ENCODE measurements at regions of chr17 and their contacts with region 1.

Region 1: GRCh38 chr17:4789901-4790704 is 1.3 kb downstream of the GLTPD2 start:
- DNase-seq: peak; percentile 95
- H3K4me3 Mint-ChIP-seq: peak overlapping the region; percentile 75
- H3K27ac Mint-ChIP-seq: peak overlapping the region; percentile 93
- H3K4me1 Mint-ChIP-seq: peaks cover 18% of the 10 kb centered on the region
- H3K27me3 Mint-ChIP-seq: no peaks in the 10 kb centered on the region
- CTCF ChIP-seq: peak; percentile 70

Region 2: DNA sequence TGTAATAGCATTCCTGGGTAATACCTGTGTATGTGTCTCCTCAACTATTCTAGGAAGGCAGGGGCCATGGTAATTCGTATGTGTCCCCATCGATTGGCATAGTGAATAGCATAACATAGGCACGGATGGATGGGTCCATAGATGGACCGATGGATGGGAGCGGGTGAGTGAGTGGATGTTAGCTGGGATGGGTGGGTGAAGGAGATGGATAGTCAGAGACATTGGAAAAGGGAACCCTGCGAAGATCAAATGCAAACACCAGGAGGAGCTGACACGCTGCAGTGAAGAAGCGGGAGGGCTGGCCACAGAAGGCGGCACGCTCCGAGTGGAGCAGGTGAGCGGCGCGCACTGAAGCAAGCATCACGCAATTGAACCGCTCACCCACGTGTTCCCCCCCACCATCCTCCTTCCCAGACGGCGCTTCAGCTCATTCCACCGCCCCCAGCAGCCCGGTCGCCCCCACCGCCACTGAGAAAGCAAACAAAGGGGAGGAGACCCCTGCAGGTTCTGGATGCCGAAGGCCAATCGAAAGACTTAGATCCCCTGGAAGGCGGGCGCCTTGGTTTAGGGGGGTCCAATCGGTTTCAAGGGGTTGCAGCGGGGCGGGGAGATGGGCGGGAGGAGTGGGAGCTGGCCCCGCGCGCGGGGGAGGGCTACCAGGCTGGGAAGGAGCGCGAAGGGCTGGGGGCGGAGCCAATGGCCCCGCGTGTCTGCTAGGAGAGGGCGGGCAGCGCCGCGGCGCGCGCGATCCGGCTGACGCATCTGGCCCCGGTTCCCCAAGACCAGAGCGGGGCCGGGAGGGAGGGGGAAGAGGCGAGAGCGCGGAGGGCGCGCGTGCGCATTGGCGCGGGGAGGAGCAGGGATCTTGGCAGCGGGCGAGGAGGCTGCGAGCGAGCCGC is 80.1 kb before region 1 on chr17 and contains the start of gene ARRB2:
- CTCF ChIA-PET with region 1: interaction called, 4 read pairs
- POLR2A ChIA-PET with region 1: interaction called, 14 read pairs
- intact Hi-C with region 1: loop called (anchors 1 kb)
- DNase-seq: peak; percentile 97
- H3K4me3 Mint-ChIP-seq: peak within 1 kb of the TSS; percentile 66
- H3K27ac Mint-ChIP-seq: peak within 1 kb of the TSS; percentile 53
- H3K4me1 Mint-ChIP-seq: peaks cover 11% of the 10 kb centered on the region
- H3K27me3 Mint-ChIP-seq: no peaks in the 10 kb centered on the region
- CTCF ChIP-seq: peak; percentile 55
- total RNA-seq, gene ARRB2: 20.7 and 25.1 TPM in 2 replicates

Region 3: GRCh38 chr17:4806777-4807604 is 16.9 kb after region 1 on chr17 and contains the start of gene PLD2:
- CTCF ChIA-PET with region 1: interaction called, 12 read pairs
- POLR2A ChIA-PET with region 1: interaction called, 37 read pairs
- intact Hi-C with region 1: no loop called
- DNase-seq: peak; percentile 83
- H3K4me3 Mint-ChIP-seq: peak within 1 kb of the TSS; percentile 77
- H3K27ac Mint-ChIP-seq: no peak within 1 kb of the TSS
- H3K4me1 Mint-ChIP-seq: peaks cover 17% of the 10 kb centered on the region
- H3K27me3 Mint-ChIP-seq: no peaks in the 10 kb centered on the region
- CTCF ChIP-seq: no peak
- total RNA-seq, gene PLD2: 27.6 and 31.7 TPM in 2 replicates

Region 4: GRCh38 chr17:4852567-4853207 is 62.6 kb after region 1 on chr17:
- CTCF ChIA-PET with region 1: interaction called, 11 read pairs
- POLR2A ChIA-PET with region 1: interaction called, 51 read pairs
- intact Hi-C with region 1: no loop called
- DNase-seq: peak; percentile 63
- H3K4me3 Mint-ChIP-seq: peak overlapping the region; percentile 2
- H3K27ac Mint-ChIP-seq: peak overlapping the region; percentile 89
- H3K4me1 Mint-ChIP-seq: peaks cover 75% of the 10 kb centered on the region
- H3K27me3 Mint-ChIP-seq: no peaks in the 10 kb centered on the region
- CTCF ChIP-seq: no peak

Region 5: GRCh38 chr17:4881761-4882555 is 91.9 kb after region 1 on chr17:
- CTCF ChIA-PET with region 1: interaction called, 88 read pairs
- POLR2A ChIA-PET with region 1: interaction called, 12 read pairs
- intact Hi-C with region 1: loop called (anchors 1 kb)
- DNase-seq: peak; percentile 78
- H3K4me3 Mint-ChIP-seq: no peak overlapping the region
- H3K27ac Mint-ChIP-seq: no peak overlapping the region
- H3K4me1 Mint-ChIP-seq: peaks cover 6% of the 10 kb centered on the region
- H3K27me3 Mint-ChIP-seq: no peaks in the 10 kb centered on the region
- CTCF ChIP-seq: peak; percentile 80

Region 6: GRCh38 chr17:4903051-4903818 is 113.1 kb after region 1 on chr17 and contains the start of gene CHRNE:
- CTCF ChIA-PET with region 1: interaction called, 8 read pairs
- POLR2A ChIA-PET with region 1: interaction called, 25 read pairs
- intact Hi-C with region 1: loop called (anchors 1 kb)
- DNase-seq: peak; percentile 87
- H3K4me3 Mint-ChIP-seq: peak within 1 kb of the TSS; percentile 13
- H3K27ac Mint-ChIP-seq: peak within 1 kb of the TSS; percentile 71
- H3K4me1 Mint-ChIP-seq: peaks cover 17% of the 10 kb centered on the region
- H3K27me3 Mint-ChIP-seq: no peaks in the 10 kb centered on the region
- CTCF ChIP-seq: peak; percentile 66
- total RNA-seq, gene CHRNE: not detected in 2 replicates

Region 7: DNA sequence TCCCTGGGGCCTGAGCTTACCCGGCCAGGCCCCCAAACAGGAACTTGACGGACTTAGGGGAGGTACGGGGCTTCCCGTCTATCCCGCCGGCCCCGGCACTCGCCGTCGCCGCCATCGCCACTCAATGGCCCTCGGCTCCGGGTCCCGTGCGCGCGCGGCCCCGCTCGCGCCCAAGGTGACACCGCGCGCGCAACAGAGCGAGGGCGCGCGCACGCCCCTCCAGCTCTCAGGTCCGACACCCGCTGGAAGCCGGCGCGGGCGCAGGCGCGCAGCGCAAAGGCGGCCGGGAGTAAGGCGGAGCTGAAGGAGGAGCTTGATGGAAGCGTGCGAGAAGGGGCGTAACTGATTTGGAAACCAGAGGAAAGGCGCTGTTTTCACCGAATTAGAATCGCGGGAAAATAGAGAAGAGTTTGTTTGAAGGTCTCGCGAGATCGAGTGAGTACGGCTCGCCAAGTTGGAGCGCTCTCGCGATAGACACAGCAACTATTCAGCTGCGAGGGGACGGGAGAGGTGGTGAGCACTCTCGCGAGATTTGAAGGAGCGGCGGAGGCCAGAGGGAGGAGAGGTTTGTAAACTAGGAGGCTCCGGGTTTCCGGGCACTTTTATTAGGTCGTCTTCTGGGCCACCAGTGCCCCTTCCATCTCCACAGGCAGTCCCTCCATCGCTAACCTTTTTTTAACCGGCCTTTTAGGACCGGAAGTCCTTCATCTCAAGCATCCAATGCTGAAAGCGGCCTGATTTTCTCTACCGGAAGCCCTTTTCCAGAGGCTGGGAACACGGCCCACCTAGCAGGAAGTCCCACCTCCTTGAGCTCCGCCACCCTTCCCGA is 149.9 kb after region 1 on chr17 and contains the starts of genes RNF167 and SLC25A11:
- CTCF ChIA-PET with region 1: interaction called, 3 read pairs
- POLR2A ChIA-PET with region 1: interaction called, 20 read pairs
- intact Hi-C with region 1: no loop called
- DNase-seq: peak; percentile 99
- H3K4me3 Mint-ChIP-seq: peak within 1 kb of the TSS; percentile 91
- H3K27ac Mint-ChIP-seq: peak within 1 kb of the TSS; percentile 98
- H3K4me1 Mint-ChIP-seq: peaks cover 44% of the 10 kb centered on the region
- H3K27me3 Mint-ChIP-seq: no peaks in the 10 kb centered on the region
- CTCF ChIP-seq: no peak
- total RNA-seq, gene RNF167: 100.0 and 109 TPM in 2 replicates
- total RNA-seq, gene SLC25A11: 46.8 and 54.5 TPM in 2 replicates